Dorsolateral prefrontal cortex (tissue), 120 donors: ENCODE measurements at regions of chr10 and their contacts with region 1.

Region 1: DNA sequence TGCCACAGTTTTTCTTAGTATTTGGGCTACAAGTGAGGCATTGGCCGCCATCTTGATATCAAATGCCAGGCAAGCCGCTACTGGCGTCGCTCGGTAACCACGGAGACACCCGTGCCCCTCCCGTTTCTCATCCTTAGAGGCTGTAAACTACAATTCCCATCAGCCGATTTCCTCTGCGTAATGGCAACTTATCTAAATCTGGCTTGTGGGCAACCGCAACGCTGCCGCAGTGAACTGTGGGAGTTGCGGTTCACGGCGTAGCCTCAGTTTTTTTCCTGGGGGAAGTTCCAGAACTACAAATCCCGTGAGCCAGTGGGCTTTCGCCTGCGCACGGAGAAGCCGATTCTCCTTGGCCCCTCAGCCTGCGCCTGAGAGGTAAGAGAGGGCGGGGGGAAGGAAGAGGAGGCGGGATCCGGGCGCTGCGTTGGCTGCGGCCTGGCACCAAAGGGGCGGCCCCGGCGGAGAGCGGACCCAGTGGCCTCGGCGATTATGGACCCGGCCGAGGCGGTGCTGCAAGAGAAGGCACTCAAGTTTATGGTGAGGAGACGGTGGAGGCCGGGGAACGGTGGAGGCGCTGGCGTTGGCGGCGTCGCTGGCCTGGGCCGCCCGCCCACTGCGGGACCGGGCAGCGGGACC is at the start of gene BTRC:
- DNase-seq: peak; percentile 93 to 99 (median 98)
- H3K4me3 ChIP-seq: peak within 1 kb of the TSS; percentile 53 to 100 (median 92)
- H3K27ac ChIP-seq: peak within 1 kb of the TSS; percentile 51 to 97 (median 88)
- H3K27me3 ChIP-seq: no peaks in the 10 kb centered on the region
- CTCF ChIP-seq: peak in 24 of 56 donors; percentile 4 to 54 (median 26)
- total RNA-seq, gene BTRC: 37.4 to 117 (median 71.0) TPM

Region 2: GRCh38 chr10:101244321-101245050 is 109.3 kb before region 1 on chr10:
- intact Hi-C with region 1: no loop called
- DNase-seq: no peak
- H3K4me3 ChIP-seq: no peak overlapping the region
- H3K27ac ChIP-seq: no peak overlapping the region
- H3K27me3 ChIP-seq: peaks cover 0 to 60% (median 16%) of the 10 kb centered on the region in 45 donors
- CTCF ChIP-seq: no peak

Region 3: GRCh38 chr10:101297901-101298486 is 55.8 kb before region 1 on chr10:
- intact Hi-C with region 1: loop called (anchors 2 to 5 kb)
- DNase-seq: peak in 9 of 10 donors; percentile 47 to 73 (median 66)
- H3K4me3 ChIP-seq: no peak overlapping the region
- H3K27ac ChIP-seq: peak overlapping the region in 1 of 59 donors; percentile 6
- H3K27me3 ChIP-seq: no peaks in the 10 kb centered on the region
- CTCF ChIP-seq: peak; percentile 41 to 88 (median 71)